CD4-positive, alpha-beta memory T cell (primary cell): ENCODE measurements at regions of chr13 and their contacts with region 1.

Region 1: DNA sequence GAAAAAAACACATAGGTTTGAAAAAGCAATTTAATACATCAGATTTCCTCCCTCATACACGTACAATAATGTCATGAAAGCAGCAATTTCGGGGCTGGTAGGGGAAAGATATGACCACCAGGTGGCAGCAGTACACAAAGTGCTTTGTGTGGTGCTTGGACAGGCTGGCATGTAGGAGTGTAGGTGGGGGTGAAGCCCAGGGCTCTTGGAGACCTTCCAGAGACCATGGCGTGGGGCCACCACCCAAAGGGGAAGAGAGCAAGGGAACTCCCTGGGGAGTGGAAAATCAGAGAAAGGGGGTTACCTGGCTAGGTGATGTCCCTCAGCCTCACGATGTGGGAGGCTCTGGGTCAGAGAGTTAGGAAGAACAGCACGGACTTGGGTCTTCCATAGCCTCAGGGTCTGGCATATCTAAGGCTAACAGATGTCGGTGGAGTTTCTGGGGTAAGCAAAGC is 11.8 kb upstream of the CCNA1 start:
- DNase-seq: peak; percentile 34 to 45 (median 41)
- H3K4me3 ChIP-seq: no peak overlapping the region
- H3K4me3 Mint-ChIP-seq: no peak overlapping the region
- H3K27ac ChIP-seq: no peak overlapping the region
- H3K27ac Mint-ChIP-seq: no peak overlapping the region
- H3K4me1 ChIP-seq: no peaks in the 10 kb centered on the region
- H3K4me1 Mint-ChIP-seq: peaks cover 0 to 8% (median 3%) of the 10 kb centered on the region in 4 donors
- H3K27me3 ChIP-seq: no peaks in the 10 kb centered on the region
- H3K27me3 Mint-ChIP-seq: peaks cover 25 to 30% of the 10 kb centered on the region in 2 donors

Region 2: GRCh38 chr13:36841391-36841790 is 420.9 kb after region 1 on chr13:
- CTCF ChIA-PET with region 1: no interaction called
- POLR2A ChIA-PET with region 1: no interaction called
- intact Hi-C with region 1: loop called (anchors 5 kb)
- DNase-seq: no peak
- H3K4me3 ChIP-seq: no peak overlapping the region
- H3K4me3 Mint-ChIP-seq: no peak overlapping the region
- H3K27ac ChIP-seq: no peak overlapping the region
- H3K27ac Mint-ChIP-seq: peak overlapping the region in 1 of 7 donors; percentile 17
- H3K4me1 ChIP-seq: no peaks in the 10 kb centered on the region
- H3K4me1 Mint-ChIP-seq: peaks cover 0 to 3% (median 0%) of the 10 kb centered on the region in 4 donors
- H3K27me3 ChIP-seq: no peaks in the 10 kb centered on the region
- H3K27me3 Mint-ChIP-seq: no peaks in the 10 kb centered on the region

Region 3: GRCh38 chr13:36981156-36981743 is 560.8 kb after region 1 on chr13:
- CTCF ChIA-PET with region 1: interaction called, 3 read pairs
- POLR2A ChIA-PET with region 1: no interaction called
- intact Hi-C with region 1: loop called (anchors 5 kb)
- DNase-seq: peak in 1 of 5 donors; percentile 2
- H3K4me3 ChIP-seq: no peak overlapping the region
- H3K4me3 Mint-ChIP-seq: no peak overlapping the region
- H3K27ac ChIP-seq: no peak overlapping the region
- H3K27ac Mint-ChIP-seq: peak overlapping the region in 1 of 7 donors; percentile 37
- H3K4me1 ChIP-seq: no peaks in the 10 kb centered on the region
- H3K4me1 Mint-ChIP-seq: peaks cover 0 to 5% (median 1%) of the 10 kb centered on the region in 4 donors
- H3K27me3 ChIP-seq: no peaks in the 10 kb centered on the region
- H3K27me3 Mint-ChIP-seq: no peaks in the 10 kb centered on the region

Region 4: DNA sequence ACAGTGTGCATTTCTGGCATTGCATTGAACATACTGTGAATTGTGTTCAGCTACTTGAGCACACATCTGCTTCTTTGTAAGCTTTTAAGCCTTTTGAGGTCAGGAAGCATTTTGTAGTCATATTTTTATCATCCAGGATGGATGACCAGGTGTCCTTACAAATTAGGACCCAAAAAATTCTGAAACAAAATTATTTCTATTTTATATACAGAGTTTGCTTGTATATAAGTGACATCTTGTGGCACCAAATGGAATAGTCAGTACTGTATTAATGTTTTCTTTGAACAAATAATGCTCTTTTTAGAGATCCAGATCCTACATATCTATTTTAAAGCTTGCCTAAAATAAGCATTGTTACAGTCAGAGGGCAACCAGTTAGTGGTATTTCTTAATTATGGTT is 648.5 kb after region 1 on chr13:
- CTCF ChIA-PET with region 1: no interaction called
- POLR2A ChIA-PET with region 1: no interaction called
- intact Hi-C with region 1: loop called (anchors 2 kb)
- DNase-seq: no peak
- H3K4me3 ChIP-seq: no peak overlapping the region
- H3K4me3 Mint-ChIP-seq: no peak overlapping the region
- H3K27ac ChIP-seq: no peak overlapping the region
- H3K27ac Mint-ChIP-seq: no peak overlapping the region
- H3K4me1 ChIP-seq: no peaks in the 10 kb centered on the region
- H3K4me1 Mint-ChIP-seq: no peaks in the 10 kb centered on the region
- H3K27me3 ChIP-seq: no peaks in the 10 kb centered on the region
- H3K27me3 Mint-ChIP-seq: peaks cover 0 to 3% of the 10 kb centered on the region in 2 donors

Region 5: DNA sequence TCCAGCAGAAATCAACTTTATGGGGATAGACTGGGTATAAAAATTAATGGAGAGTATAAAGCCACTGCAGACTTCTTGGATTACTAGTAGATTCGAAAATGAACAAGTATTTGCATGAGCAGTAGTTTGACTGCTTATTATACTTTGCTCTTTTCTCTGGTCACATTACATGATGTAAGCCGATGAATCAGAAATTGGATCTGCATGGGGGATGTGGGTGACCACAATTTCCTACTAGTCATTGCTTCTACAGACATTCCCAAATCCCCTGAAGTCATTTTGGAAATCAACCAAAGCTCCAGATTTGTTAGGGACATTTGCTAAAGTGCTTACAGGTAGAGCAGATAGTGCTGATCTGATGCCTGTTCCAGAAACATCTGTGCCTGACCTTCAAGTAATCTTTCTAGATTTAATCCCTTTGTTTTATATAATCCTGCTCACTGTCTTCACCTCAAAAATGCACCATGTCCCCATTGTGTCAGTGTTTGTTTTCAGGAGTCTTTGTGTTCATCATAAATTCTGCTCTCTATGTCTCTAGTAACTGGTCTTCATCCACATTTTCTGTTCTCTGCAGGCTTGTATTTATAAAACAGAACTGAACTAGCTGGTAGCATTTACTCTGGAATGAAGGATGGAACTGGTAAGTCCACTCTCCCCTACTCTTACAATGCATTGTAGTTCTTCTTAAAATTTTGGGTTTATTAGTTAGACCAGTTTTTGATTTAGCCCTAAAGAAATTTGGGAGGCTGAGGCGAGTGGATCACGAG is 886.5 kb after region 1 on chr13:
- CTCF ChIA-PET with region 1: no interaction called
- POLR2A ChIA-PET with region 1: no interaction called
- intact Hi-C with region 1: no loop called
- DNase-seq: no peak
- H3K4me3 ChIP-seq: no peak overlapping the region
- H3K4me3 Mint-ChIP-seq: no peak overlapping the region
- H3K27ac ChIP-seq: no peak overlapping the region
- H3K27ac Mint-ChIP-seq: no peak overlapping the region
- H3K4me1 ChIP-seq: no peaks in the 10 kb centered on the region
- H3K4me1 Mint-ChIP-seq: no peaks in the 10 kb centered on the region
- H3K27me3 ChIP-seq: no peaks in the 10 kb centered on the region
- H3K27me3 Mint-ChIP-seq: no peaks in the 10 kb centered on the region